ENCODE measurements at regions of chr12 and their contacts with region 1.

Region 1: GRCh38 chr12:6470375-6471163 is at the start of gene VAMP1:
- DNase-seq: peak; percentile 89 to 98 (median 95)
- ATAC-seq: peak; percentile 88 to 96 (median 92)
- H3K4me3 ChIP-seq: peak within 1 kb of the TSS; percentile 86 to 93
- H3K4me3 Mint-ChIP-seq: peak within 1 kb of the TSS; percentile 87 to 93 (median 91)
- H3K27ac ChIP-seq: peak within 1 kb of the TSS; percentile 83
- H3K27ac Mint-ChIP-seq: peak within 1 kb of the TSS; percentile 92 to 96
- H3K4me1 ChIP-seq: peaks cover 24 to 41% of the 10 kb centered on the region in 2 experiments
- H3K4me1 Mint-ChIP-seq: peaks cover 50 to 53% (median 52%) of the 10 kb centered on the region in 3 donors
- H3K27me3 ChIP-seq: no peaks in the 10 kb centered on the region
- H3K27me3 Mint-ChIP-seq: no peaks in the 10 kb centered on the region
- total RNA-seq, gene VAMP1: 64.6 to 92.2 (median 75.8) TPM

Region 2: GRCh38 chr12:5522432-5523335 is 947.9 kb before region 1 on chr12:
- CTCF ChIA-PET with region 1: no interaction called
- POLR2A ChIA-PET with region 1: no interaction called
- DNase-seq: no peak
- ATAC-seq: no peak
- H3K4me3 ChIP-seq: no peak overlapping the region
- H3K4me3 Mint-ChIP-seq: no peak overlapping the region
- H3K27ac ChIP-seq: no peak overlapping the region
- H3K27ac Mint-ChIP-seq: no peak overlapping the region
- H3K4me1 ChIP-seq: no peaks in the 10 kb centered on the region
- H3K4me1 Mint-ChIP-seq: no peaks in the 10 kb centered on the region
- H3K27me3 ChIP-seq: peaks cover 0 to 10% of the 10 kb centered on the region in 2 experiments
- H3K27me3 Mint-ChIP-seq: peaks cover 0 to 3% of the 10 kb centered on the region in 2 donors

Region 3: DNA sequence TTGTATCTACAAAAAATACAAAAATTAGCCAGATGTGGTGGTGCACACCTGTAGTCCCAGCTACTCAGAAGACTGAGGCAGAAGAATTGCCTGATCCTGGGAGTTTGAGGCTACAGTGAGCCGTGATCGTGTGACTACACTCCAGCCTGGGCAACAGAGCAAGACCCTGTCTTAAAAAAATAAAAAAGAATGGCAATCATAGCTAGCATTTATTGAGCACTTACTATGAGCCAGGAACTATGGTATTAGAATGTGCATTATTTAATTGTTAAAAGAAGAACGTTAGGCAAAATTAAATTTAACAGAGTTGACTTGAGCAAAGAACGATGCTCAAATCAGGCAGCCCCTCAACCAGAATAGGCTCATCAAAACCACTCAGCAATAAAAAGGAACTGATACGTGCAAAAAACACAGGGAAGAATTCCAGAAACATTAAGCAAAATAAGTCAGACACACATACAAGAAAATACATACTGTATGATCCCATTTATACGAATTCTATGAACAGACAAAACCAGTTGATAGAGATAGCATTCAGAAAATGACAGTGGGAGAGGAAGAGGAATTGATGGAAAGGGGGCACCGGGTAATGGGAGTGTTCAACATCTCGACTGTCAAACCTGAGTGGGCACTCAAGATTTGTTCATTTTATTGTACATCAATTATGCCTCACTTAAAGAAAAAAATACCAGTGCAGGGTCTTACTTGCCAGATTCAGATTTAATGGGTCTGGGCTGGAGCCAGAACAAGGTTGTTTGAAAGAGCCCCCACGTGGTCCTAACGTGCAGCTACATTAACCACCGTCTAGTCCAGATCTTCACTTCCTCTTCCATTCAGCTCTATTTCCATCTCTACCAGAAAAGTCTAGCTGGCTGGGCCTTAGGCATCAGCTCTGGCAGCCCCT is 103.3 kb before region 1 on chr12:
- CTCF ChIA-PET with region 1: interaction called in 1 of 2 experiments, 11 read pairs
- POLR2A ChIA-PET with region 1: no interaction called
- DNase-seq: peak in 28 of 35 experiments; percentile 20 to 73 (median 39)
- ATAC-seq: peak; percentile 58 to 65 (median 62)
- H3K4me3 ChIP-seq: no peak overlapping the region
- H3K4me3 Mint-ChIP-seq: no peak overlapping the region
- H3K27ac ChIP-seq: peak overlapping the region; percentile 54
- H3K27ac Mint-ChIP-seq: peak overlapping the region; percentile 36 to 81
- H3K4me1 ChIP-seq: peaks cover 9 to 40% of the 10 kb centered on the region in 2 experiments
- H3K4me1 Mint-ChIP-seq: peaks cover 20 to 30% (median 28%) of the 10 kb centered on the region in 3 donors
- H3K27me3 ChIP-seq: no peaks in the 10 kb centered on the region
- H3K27me3 Mint-ChIP-seq: no peaks in the 10 kb centered on the region

Region 4: GRCh38 chr12:6430124-6430989 is 40.2 kb before region 1 on chr12:
- CTCF ChIA-PET with region 1: interaction called, 12 to 16 read pairs
- POLR2A ChIA-PET with region 1: interaction called in 1 of 2 experiments, 4 read pairs
- DNase-seq: peak in 1 of 35 experiments; percentile 35
- ATAC-seq: no peak
- H3K4me3 ChIP-seq: no peak overlapping the region
- H3K4me3 Mint-ChIP-seq: peak overlapping the region in 2 of 3 donors; percentile 39 to 42
- H3K27ac ChIP-seq: no peak overlapping the region
- H3K27ac Mint-ChIP-seq: peak overlapping the region; percentile 57 to 77
- H3K4me1 ChIP-seq: peaks cover 43 to 73% of the 10 kb centered on the region in 2 experiments
- H3K4me1 Mint-ChIP-seq: peaks cover 62 to 80% (median 71%) of the 10 kb centered on the region in 3 donors
- H3K27me3 ChIP-seq: no peaks in the 10 kb centered on the region
- H3K27me3 Mint-ChIP-seq: no peaks in the 10 kb centered on the region

Region 5: GRCh38 chr12:6451348-6452244 is 19.0 kb before region 1 on chr12 and contains the start of gene TAPBPL:
- CTCF ChIA-PET with region 1: interaction called, 3 to 14 read pairs
- POLR2A ChIA-PET with region 1: interaction called, 4 to 6 read pairs
- DNase-seq: peak; percentile 61 to 93 (median 80)
- ATAC-seq: peak; percentile 85 to 95 (median 88)
- H3K4me3 ChIP-seq: peak within 1 kb of the TSS; percentile 93 to 94
- H3K4me3 Mint-ChIP-seq: peak within 1 kb of the TSS; percentile 97 to 99 (median 98)
- H3K27ac ChIP-seq: peak within 1 kb of the TSS; percentile 98
- H3K27ac Mint-ChIP-seq: peak within 1 kb of the TSS; percentile 99 to 100
- H3K4me1 ChIP-seq: peaks cover 30 to 74% of the 10 kb centered on the region in 2 experiments
- H3K4me1 Mint-ChIP-seq: peaks cover 71 to 85% (median 76%) of the 10 kb centered on the region in 3 donors
- H3K27me3 ChIP-seq: no peaks in the 10 kb centered on the region
- H3K27me3 Mint-ChIP-seq: no peaks in the 10 kb centered on the region
- total RNA-seq, gene TAPBPL: 22.6 to 77.0 (median 60.3) TPM

Region 6: GRCh38 chr12:6540181-6540877 is 69.8 kb after region 1 on chr12:
- CTCF ChIA-PET with region 1: interaction called, 8 to 12 read pairs
- POLR2A ChIA-PET with region 1: interaction called in 1 of 2 experiments, 3 read pairs
- DNase-seq: peak in 9 of 35 experiments; percentile 14 to 59 (median 42)
- ATAC-seq: peak; percentile 48 to 61 (median 53)
- H3K4me3 ChIP-seq: peak overlapping the region; percentile 3 to 18
- H3K4me3 Mint-ChIP-seq: peak overlapping the region; percentile 63 to 72 (median 70)
- H3K27ac ChIP-seq: peak overlapping the region; percentile 29
- H3K27ac Mint-ChIP-seq: peak overlapping the region; percentile 81 to 88
- H3K4me1 ChIP-seq: peaks cover 31 to 60% of the 10 kb centered on the region in 2 experiments
- H3K4me1 Mint-ChIP-seq: peaks cover 46 to 65% (median 47%) of the 10 kb centered on the region in 3 donors
- H3K27me3 ChIP-seq: no peaks in the 10 kb centered on the region
- H3K27me3 Mint-ChIP-seq: no peaks in the 10 kb centered on the region